Aorta (tissue), 5 donors: ENCODE measurements at regions of chr1 and their contacts with region 1.

Region 1: DNA sequence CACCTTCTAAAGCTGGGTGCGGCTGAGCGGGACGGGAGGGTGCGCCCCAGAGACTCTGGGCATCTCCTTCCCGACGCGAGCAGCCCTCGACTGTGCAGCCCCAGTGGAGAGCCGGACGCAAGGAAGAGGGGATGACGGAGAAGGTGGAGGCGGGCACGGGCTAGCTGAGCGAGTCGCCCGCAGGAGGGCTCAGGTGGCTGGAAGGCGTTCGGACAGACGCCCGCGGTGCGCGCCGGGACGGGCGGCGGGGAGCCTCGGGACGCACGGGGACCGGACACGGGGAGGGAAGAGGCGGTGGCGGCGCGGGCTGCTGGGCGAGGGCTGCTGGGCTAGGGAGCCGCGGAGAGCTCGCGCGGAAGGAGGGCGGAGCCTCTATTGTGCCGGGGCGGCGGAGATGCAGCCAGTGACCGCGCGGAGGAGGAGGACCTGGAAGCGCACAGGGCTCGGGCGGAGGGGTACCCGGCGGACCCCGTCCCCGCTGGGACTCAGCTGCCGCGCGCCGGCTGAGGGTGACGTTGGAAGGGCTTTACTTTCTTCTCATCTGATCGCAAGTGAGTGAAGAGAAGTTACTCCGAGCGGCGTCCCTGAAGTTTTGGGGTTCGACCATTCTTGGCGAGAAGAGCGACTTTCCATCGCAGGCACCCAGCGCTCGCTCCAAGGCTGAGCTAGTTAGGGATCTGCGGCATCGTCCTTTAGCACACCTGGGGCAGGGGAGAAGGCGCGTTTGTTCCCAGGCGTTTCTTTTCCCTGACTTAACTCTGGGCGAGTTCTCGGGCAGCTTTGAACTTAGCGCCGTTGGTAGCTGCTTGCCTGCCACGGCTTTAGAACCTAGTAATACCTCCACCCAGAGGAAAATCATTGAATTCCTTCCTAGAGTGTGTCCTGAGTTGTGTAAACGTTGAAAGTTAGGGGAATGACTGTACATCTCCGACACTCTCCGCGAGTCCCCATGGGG is at the start of gene OLFML2B:
- DNase-seq: peak; percentile 90 to 93
- ATAC-seq: peak; percentile 86
- H3K4me3 ChIP-seq: peak within 1 kb of the TSS; percentile 23 to 70
- H3K27ac ChIP-seq: peak within 1 kb of the TSS in 1 of 2 donors; percentile 65
- H3K4me1 ChIP-seq: peaks cover 6 to 17% of the 10 kb centered on the region in 2 donors
- H3K27me3 ChIP-seq: no peaks in the 10 kb centered on the region
- total RNA-seq, gene OLFML2B: 31.9 to 82.6 TPM

Region 2: GRCh38 chr1:161905269-161905884 is 118.4 kb before region 1 on chr1:
- intact Hi-C with region 1: loop called in 1 of 2 experiments (anchors 5 kb)
- DNase-seq: no peak
- ATAC-seq: no peak
- H3K4me3 ChIP-seq: no peak overlapping the region
- H3K27ac ChIP-seq: no peak overlapping the region
- H3K4me1 ChIP-seq: no peaks in the 10 kb centered on the region
- H3K27me3 ChIP-seq: no peaks in the 10 kb centered on the region

Region 3: GRCh38 chr1:161962091-161962887 is 61.5 kb before region 1 on chr1:
- intact Hi-C with region 1: loop called (anchors 2 to 5 kb)
- DNase-seq: no peak
- ATAC-seq: peak; percentile 71
- H3K4me3 ChIP-seq: peak overlapping the region; percentile 8 to 29
- H3K27ac ChIP-seq: peak overlapping the region; percentile 54 to 93
- H3K4me1 ChIP-seq: peaks cover 0 to 16% of the 10 kb centered on the region in 2 donors
- H3K27me3 ChIP-seq: no peaks in the 10 kb centered on the region

Region 4: DNA sequence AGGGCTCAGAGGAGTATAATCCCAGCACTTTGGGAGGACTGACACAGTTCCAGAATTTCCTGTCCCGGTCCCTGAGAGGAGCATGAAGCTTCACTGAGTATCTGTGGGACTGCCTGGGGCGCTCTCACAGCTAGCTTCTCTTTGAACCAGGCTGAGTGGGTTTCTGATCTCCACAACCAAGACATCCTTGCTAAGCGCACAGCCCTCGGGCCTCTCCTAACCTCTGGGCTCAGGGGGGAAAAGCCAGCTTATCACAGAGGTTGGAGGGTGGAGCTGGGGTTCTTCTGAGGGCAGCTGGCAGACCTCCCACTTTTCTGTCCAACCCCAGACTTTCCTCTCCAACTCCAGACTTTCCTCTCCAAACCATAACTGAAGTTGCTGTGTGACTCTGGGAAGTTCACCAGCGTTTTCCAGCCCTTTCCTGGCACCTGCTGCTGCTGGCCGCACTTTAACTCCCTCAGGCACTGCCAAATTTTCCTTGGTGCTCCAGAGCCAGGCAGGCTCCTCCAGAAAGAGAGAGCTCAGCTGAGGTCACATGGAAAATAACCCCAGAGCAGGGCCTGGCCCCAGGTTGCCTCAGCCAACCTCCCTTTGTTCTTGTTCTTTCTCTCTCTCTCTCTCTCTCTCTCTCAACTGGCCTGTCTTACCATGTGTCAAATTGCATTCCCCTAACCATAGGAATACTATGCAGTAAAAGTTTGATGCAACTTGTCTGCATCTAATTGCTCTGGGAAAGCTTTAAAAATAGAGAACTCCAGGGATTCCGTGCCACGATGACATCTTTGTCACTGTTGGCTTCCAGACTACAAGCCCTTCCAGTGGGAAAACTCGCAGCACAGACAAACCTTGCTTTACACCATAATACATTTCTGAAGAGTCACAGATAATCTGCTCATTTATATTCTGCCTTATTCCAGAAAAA is 49.6 kb before region 1 on chr1:
- intact Hi-C with region 1: loop called in 1 of 2 experiments (anchors 5 kb)
- DNase-seq: peak in 1 of 2 donors; percentile 77
- ATAC-seq: peak; percentile 64
- H3K4me3 ChIP-seq: no peak overlapping the region
- H3K27ac ChIP-seq: peak overlapping the region in 1 of 2 donors; percentile 76
- H3K4me1 ChIP-seq: peaks cover 4% of the 10 kb centered on the region in 2 donors
- H3K27me3 ChIP-seq: no peaks in the 10 kb centered on the region

Region 5: GRCh38 chr1:161986328-161986727 is 37.5 kb before region 1 on chr1:
- intact Hi-C with region 1: no loop called
- DNase-seq: no peak
- ATAC-seq: peak; percentile 48
- H3K4me3 ChIP-seq: no peak overlapping the region
- H3K27ac ChIP-seq: no peak overlapping the region
- H3K4me1 ChIP-seq: no peaks in the 10 kb centered on the region
- H3K27me3 ChIP-seq: no peaks in the 10 kb centered on the region